CD8-positive, alpha-beta T cell (primary cell): ENCODE measurements at regions of chr19 and their contacts with region 1.

Region 1: GRCh38 chr19:7326105-7326877 is 22.4 kb upstream of the ARHGEF18 start:
- DNase-seq: peak in 4 of 9 experiments; percentile 23 to 66 (median 50)
- ATAC-seq: no peak
- H3K4me3 ChIP-seq: no peak overlapping the region
- H3K4me3 Mint-ChIP-seq: no peak overlapping the region
- H3K27ac ChIP-seq: no peak overlapping the region
- H3K27ac Mint-ChIP-seq: no peak overlapping the region
- H3K4me1 ChIP-seq: no peaks in the 10 kb centered on the region
- H3K4me1 Mint-ChIP-seq: no peaks in the 10 kb centered on the region
- H3K27me3 ChIP-seq: no peaks in the 10 kb centered on the region
- H3K27me3 Mint-ChIP-seq: no peaks in the 10 kb centered on the region
- CTCF ChIP-seq: peak; percentile 38

Region 2: DNA sequence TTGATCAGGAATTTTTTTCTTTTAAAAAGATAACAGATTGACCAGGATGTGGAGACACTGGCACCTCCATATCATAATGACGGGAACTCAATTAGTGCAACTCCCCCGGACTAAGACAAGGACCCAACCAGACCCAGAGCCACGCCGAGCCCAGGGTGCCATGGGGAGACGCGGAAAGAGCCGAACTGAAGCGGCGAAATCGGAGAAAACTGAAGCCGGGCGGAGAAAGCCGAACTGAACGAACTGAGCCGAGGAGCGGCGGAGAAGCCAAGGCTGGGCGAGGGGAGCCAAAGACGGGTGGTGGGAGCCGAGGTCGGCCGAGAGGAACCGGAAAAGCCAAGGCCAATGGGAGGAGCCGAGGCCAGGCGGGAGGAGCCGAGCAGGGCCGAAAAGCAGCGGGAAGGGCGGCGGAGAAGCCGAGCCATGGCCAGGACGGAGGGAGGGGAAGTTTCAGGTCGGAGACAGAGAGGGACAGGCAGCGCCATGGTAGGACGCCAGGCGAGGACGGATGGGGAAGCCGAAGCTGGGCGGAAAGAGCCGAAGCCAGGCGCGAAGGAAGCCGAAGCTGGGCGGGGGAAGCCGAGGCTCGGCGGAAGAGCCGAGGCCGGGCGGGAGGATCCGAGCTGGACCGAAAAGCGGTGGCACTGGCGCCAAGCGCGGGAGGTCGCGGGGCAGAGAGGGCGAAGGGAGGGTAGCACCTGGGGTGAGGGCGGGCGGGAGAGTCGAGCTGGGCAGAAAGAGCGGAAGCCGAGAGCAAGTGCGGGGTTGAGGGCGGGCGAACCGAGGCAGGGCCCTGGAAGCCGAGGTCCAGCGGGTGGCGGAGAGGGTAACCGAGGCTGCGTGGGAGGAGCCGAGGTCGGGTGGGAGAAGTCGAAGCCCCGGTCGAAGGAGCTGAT is 227.3 kb before region 1 on chr19:
- CTCF ChIA-PET with region 1: interaction called, 9 read pairs
- POLR2A ChIA-PET with region 1: no interaction called
- intact Hi-C with region 1: loop called in 1 of 2 experiments (anchors 2 kb)
- DNase-seq: peak; percentile 79 to 94 (median 88)
- ATAC-seq: peak; percentile 94
- H3K4me3 ChIP-seq: peak overlapping the region; percentile 90
- H3K4me3 Mint-ChIP-seq: peak overlapping the region; percentile 92
- H3K27ac ChIP-seq: peak overlapping the region; percentile 68 to 93
- H3K27ac Mint-ChIP-seq: peak overlapping the region; percentile 95
- H3K4me1 ChIP-seq: peaks cover 14% of the 10 kb centered on the region
- H3K4me1 Mint-ChIP-seq: peaks cover 30% of the 10 kb centered on the region
- H3K27me3 ChIP-seq: no peaks in the 10 kb centered on the region
- H3K27me3 Mint-ChIP-seq: no peaks in the 10 kb centered on the region
- CTCF ChIP-seq: no peak

Region 3: DNA sequence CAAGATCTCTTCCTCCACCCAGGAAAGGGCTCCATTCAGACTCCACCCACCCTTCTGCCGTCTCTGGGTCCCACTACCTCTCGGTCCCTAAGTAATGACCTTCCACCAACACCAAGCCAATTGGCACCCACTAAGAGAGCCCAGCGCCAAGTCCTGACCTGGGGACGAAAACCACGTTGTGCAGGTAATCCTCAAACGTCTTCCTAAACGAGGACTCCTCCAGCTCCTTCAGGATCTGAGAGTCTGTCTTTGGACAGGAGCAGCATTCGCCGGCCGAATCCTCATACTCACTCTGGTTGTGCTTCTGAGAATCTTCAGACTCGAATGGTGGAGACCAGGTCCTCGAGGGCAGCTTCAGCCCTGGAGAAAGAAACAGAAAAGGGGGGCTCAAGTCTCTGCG is 173.7 kb before region 1 on chr19:
- CTCF ChIA-PET with region 1: interaction called, 16 read pairs
- POLR2A ChIA-PET with region 1: no interaction called
- intact Hi-C with region 1: loop called in 1 of 2 experiments (anchors 5 kb)
- DNase-seq: no peak
- ATAC-seq: no peak
- H3K4me3 ChIP-seq: no peak overlapping the region
- H3K4me3 Mint-ChIP-seq: no peak overlapping the region
- H3K27ac ChIP-seq: no peak overlapping the region
- H3K27ac Mint-ChIP-seq: no peak overlapping the region
- H3K4me1 ChIP-seq: no peaks in the 10 kb centered on the region
- H3K4me1 Mint-ChIP-seq: peaks cover 3% of the 10 kb centered on the region
- H3K27me3 ChIP-seq: peaks cover 0 to 3% of the 10 kb centered on the region in 2 experiments
- H3K27me3 Mint-ChIP-seq: no peaks in the 10 kb centered on the region
- CTCF ChIP-seq: no peak

Region 4: GRCh38 chr19:7340959-7341837 is 14.9 kb after region 1 on chr19:
- CTCF ChIA-PET with region 1: interaction called, 34 read pairs
- POLR2A ChIA-PET with region 1: interaction called, 3 read pairs
- intact Hi-C with region 1: loop called in 1 of 2 experiments (anchors 1 kb)
- DNase-seq: peak; percentile 77 to 96 (median 84)
- ATAC-seq: peak; percentile 27
- H3K4me3 ChIP-seq: no peak overlapping the region
- H3K4me3 Mint-ChIP-seq: no peak overlapping the region
- H3K27ac ChIP-seq: no peak overlapping the region
- H3K27ac Mint-ChIP-seq: peak overlapping the region; percentile 85
- H3K4me1 ChIP-seq: peaks cover 49% of the 10 kb centered on the region
- H3K4me1 Mint-ChIP-seq: peaks cover 52% of the 10 kb centered on the region
- H3K27me3 ChIP-seq: no peaks in the 10 kb centered on the region
- H3K27me3 Mint-ChIP-seq: no peaks in the 10 kb centered on the region
- CTCF ChIP-seq: peak; percentile 93

Region 5: DNA sequence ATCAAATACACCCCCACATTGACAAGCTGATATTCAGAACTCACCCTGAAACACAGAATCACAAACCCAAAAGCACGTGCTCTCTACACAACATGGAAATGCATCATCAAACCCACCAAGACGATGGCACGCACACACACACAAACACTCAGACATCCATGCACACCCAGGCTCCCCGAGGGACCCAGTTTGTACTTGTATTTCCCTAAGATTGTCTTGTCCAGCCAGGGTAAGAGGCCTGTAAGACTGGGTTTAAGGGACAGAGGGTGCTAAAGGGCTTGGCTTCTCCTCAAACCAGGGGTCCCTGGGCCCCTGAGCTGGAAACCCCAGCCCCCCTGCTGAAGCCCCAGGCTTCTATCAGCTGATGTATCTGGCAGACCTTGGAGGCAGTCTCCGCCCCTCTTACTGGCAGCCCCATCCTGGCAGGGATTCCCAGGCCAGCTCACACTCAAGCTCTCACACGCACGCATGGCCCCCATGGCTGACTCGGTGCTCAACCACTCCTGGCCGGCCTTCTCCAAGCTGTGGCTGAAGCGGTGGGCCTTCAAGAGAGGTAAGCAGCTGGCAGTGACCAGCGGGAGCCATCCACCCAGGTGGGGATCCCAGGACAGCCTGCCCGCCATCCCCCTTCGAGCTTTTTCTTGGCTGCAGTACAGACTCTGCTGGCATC is 29.0 kb after region 1 on chr19:
- CTCF ChIA-PET with region 1: interaction called, 17 read pairs
- POLR2A ChIA-PET with region 1: interaction called, 3 read pairs
- intact Hi-C with region 1: no loop called
- DNase-seq: no peak
- ATAC-seq: no peak
- H3K4me3 ChIP-seq: no peak overlapping the region
- H3K4me3 Mint-ChIP-seq: peak overlapping the region; percentile 76
- H3K27ac ChIP-seq: no peak overlapping the region
- H3K27ac Mint-ChIP-seq: peak overlapping the region; percentile 95
- H3K4me1 ChIP-seq: peaks cover 70% of the 10 kb centered on the region
- H3K4me1 Mint-ChIP-seq: peaks cover 80% of the 10 kb centered on the region
- H3K27me3 ChIP-seq: no peaks in the 10 kb centered on the region
- H3K27me3 Mint-ChIP-seq: no peaks in the 10 kb centered on the region
- CTCF ChIP-seq: no peak

Region 6: GRCh38 chr19:7382694-7383093 is 56.4 kb after region 1 on chr19:
- CTCF ChIA-PET with region 1: interaction called, 11 read pairs
- POLR2A ChIA-PET with region 1: no interaction called
- intact Hi-C with region 1: loop called in 1 of 2 experiments (anchors 1 kb)
- DNase-seq: no peak
- ATAC-seq: no peak
- H3K4me3 ChIP-seq: no peak overlapping the region
- H3K4me3 Mint-ChIP-seq: no peak overlapping the region
- H3K27ac ChIP-seq: no peak overlapping the region
- H3K27ac Mint-ChIP-seq: no peak overlapping the region
- H3K4me1 ChIP-seq: no peaks in the 10 kb centered on the region
- H3K4me1 Mint-ChIP-seq: peaks cover 19% of the 10 kb centered on the region
- H3K27me3 ChIP-seq: no peaks in the 10 kb centered on the region
- H3K27me3 Mint-ChIP-seq: no peaks in the 10 kb centered on the region
- CTCF ChIP-seq: no peak